ENCODE measurements at regions of chr7 and their contacts with region 1.

Region 1: GRCh38 chr7:83655951-83656556 is 7.1 kb upstream of the SEMA3E start:
- DNase-seq: peak; percentile 20
- CTCF ChIP-seq: peak; percentile 91

Region 2: GRCh38 chr7:83427929-83428328 is 228.1 kb before region 1 on chr7:
- in situ Hi-C with region 1: loop called (anchors 25 kb)
- DNase-seq: no peak
- CTCF ChIP-seq: no peak

Measured in GM13977 (cell line).